WTC11 (cell line): ENCODE measurements at regions of chr1 and their contacts with region 1.

Region 1: GRCh38 chr1:12619792-12620487 is 1.9 kb upstream of the DHRS3 start:
- DNase-seq: peak; percentile 88
- ATAC-seq: peak; percentile 35
- H3K4me3 Mint-ChIP-seq: peak overlapping the region; percentile 98
- H3K27ac Mint-ChIP-seq: no peak overlapping the region
- H3K4me1 Mint-ChIP-seq: peaks cover 53% of the 10 kb centered on the region
- H3K27me3 Mint-ChIP-seq: no peaks in the 10 kb centered on the region
- CTCF ChIP-seq: peak; percentile 93

Region 2: GRCh38 chr1:12339396-12339795 is 280.5 kb before region 1 on chr1:
- CTCF ChIA-PET with region 1: interaction called, 12 read pairs
- POLR2A ChIA-PET with region 1: no interaction called
- DNase-seq: no peak
- ATAC-seq: peak; percentile 65
- H3K4me3 Mint-ChIP-seq: no peak overlapping the region
- H3K27ac Mint-ChIP-seq: no peak overlapping the region
- H3K4me1 Mint-ChIP-seq: peaks cover 25% of the 10 kb centered on the region
- H3K27me3 Mint-ChIP-seq: no peaks in the 10 kb centered on the region
- CTCF ChIP-seq: no peak

Region 3: GRCh38 chr1:12585536-12585935 is 34.4 kb before region 1 on chr1:
- CTCF ChIA-PET with region 1: no interaction called
- POLR2A ChIA-PET with region 1: no interaction called
- DNase-seq: no peak
- ATAC-seq: no peak
- H3K4me3 Mint-ChIP-seq: no peak overlapping the region
- H3K27ac Mint-ChIP-seq: no peak overlapping the region
- H3K4me1 Mint-ChIP-seq: peaks cover 6% of the 10 kb centered on the region
- H3K27me3 Mint-ChIP-seq: no peaks in the 10 kb centered on the region
- CTCF ChIP-seq: no peak

Region 4: DNA sequence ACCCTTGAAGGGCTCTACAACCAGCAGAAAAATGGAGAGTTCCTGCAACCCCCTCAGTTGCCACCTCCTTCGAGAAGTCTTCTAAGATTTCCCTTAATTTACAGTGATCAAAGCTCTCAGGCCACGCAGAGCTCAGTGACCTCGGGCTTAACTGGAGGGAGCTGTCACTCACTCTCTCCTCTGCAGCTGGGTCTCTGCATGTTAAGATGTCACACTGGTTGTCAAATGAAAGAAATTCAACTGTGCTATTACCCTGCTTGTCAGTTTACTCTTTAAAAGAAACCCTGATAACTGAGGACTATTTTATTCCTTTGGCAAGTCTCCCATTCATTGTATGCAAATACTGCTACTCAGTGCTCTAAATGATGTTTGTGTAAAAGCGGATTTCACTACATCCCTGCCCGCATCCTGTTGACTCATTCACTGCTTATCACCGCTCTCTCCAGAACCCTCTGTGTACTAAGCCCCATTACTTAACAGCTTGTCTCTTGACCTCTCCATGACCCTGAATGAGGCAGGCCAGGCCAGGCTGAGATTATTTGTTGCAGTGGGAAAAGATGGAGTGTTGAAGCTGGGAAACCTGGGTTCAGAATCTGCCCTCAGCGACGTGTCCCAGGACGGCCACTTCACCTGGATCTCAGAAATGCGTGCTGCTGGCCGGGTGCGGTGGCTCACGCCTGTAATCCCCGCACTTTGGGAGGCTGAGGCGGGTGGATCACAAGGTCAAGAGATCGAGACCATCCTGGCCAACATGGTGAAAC is 15.6 kb before region 1 on chr1:
- CTCF ChIA-PET with region 1: interaction called, 107 read pairs
- POLR2A ChIA-PET with region 1: interaction called, 11 read pairs
- DNase-seq: no peak
- ATAC-seq: peak; percentile 21
- H3K4me3 Mint-ChIP-seq: no peak overlapping the region
- H3K27ac Mint-ChIP-seq: no peak overlapping the region
- H3K4me1 Mint-ChIP-seq: peaks cover 50% of the 10 kb centered on the region
- H3K27me3 Mint-ChIP-seq: no peaks in the 10 kb centered on the region; the same call in 1 of the 2 replicates
- CTCF ChIP-seq: no peak

Region 5: DNA sequence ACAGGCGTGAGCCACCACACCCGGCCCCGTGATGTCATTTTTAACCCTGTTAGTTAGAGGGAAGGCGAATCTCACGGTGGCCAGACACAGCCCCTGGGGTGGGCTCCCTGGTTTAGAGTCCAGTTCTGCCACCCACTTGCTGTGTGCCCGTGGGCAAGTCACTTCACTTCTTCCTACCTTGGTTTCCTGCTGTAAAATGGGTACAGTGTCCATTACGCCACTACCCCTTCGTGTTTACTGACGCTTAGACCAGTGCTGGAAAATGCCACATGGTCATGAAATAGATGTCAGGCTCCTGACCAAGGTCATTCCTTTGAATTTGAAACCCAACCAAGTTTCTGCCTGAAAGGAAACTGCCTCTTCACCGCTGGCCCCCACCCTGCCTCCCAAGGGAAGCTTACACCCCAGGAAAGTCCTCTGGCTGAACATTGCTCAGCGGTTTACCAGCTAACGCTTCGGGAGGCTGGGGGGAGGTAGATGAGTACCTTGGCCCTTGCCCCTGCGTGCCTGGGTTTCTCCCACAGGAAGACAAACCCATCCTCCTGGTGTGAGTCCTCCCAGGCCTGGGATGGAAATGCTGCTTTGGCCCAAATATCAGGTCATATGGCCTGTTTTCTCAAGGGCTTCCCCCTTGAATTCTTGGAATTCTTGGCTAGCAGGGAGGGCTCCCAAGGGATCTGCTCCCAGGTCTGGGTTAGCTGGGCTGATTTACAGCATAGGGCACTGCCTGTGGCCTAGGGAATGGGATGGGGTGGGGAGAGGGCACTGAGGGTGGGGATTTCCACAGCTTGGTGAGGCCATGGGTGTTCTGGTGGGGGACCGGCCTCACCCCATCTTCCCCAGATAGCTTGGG is 16.4 kb after region 1 on chr1:
- CTCF ChIA-PET with region 1: interaction called, 36 read pairs
- POLR2A ChIA-PET with region 1: no interaction called
- DNase-seq: peak; percentile 40
- ATAC-seq: peak; percentile 86
- H3K4me3 Mint-ChIP-seq: no peak overlapping the region
- H3K27ac Mint-ChIP-seq: peak overlapping the region; percentile 95
- H3K4me1 Mint-ChIP-seq: peaks cover 37% of the 10 kb centered on the region
- H3K27me3 Mint-ChIP-seq: peaks cover 12% of the 10 kb centered on the region; the same call in 1 of the 2 replicates
- CTCF ChIP-seq: no peak